ENCODE measurements at regions of chr6 and their contacts with region 1.

Region 1: GRCh38 chr6:109187399-109188114 is 92.2 kb downstream of the CEP57L1 start:
- DNase-seq: peak; percentile 72
- ATAC-seq: peak; percentile 74
- H3K4me3 ChIP-seq: no peak overlapping the region
- H3K27ac ChIP-seq: no peak overlapping the region
- H3K4me1 ChIP-seq: peaks cover 17% of the 10 kb centered on the region
- H3K27me3 ChIP-seq: no peaks in the 10 kb centered on the region
- CTCF ChIP-seq: peak; percentile 92

Region 2: GRCh38 chr6:109299776-109300564 is 112.4 kb after region 1 on chr6:
- CTCF ChIA-PET with region 1: no interaction called
- POLR2A ChIA-PET with region 1: interaction called, 3 read pairs
- intact Hi-C with region 1: loop called (anchors 5 kb)
- DNase-seq: no peak
- ATAC-seq: peak; percentile 39
- H3K4me3 ChIP-seq: no peak overlapping the region
- H3K27ac ChIP-seq: no peak overlapping the region
- H3K4me1 ChIP-seq: peaks cover 12% of the 10 kb centered on the region; the same call in 1 of the 2 replicates
- H3K27me3 ChIP-seq: no peaks in the 10 kb centered on the region
- CTCF ChIP-seq: no peak

Region 3: GRCh38 chr6:109336221-109336961 is 148.8 kb after region 1 on chr6:
- CTCF ChIA-PET with region 1: no interaction called
- POLR2A ChIA-PET with region 1: no interaction called
- intact Hi-C with region 1: loop called (anchors 2 kb)
- DNase-seq: peak; percentile 97
- ATAC-seq: peak; percentile 95
- H3K4me3 ChIP-seq: no peak overlapping the region
- H3K27ac ChIP-seq: peak overlapping the region; percentile 96
- H3K4me1 ChIP-seq: peaks cover 23% of the 10 kb centered on the region
- H3K27me3 ChIP-seq: no peaks in the 10 kb centered on the region
- CTCF ChIP-seq: no peak

Region 4: DNA sequence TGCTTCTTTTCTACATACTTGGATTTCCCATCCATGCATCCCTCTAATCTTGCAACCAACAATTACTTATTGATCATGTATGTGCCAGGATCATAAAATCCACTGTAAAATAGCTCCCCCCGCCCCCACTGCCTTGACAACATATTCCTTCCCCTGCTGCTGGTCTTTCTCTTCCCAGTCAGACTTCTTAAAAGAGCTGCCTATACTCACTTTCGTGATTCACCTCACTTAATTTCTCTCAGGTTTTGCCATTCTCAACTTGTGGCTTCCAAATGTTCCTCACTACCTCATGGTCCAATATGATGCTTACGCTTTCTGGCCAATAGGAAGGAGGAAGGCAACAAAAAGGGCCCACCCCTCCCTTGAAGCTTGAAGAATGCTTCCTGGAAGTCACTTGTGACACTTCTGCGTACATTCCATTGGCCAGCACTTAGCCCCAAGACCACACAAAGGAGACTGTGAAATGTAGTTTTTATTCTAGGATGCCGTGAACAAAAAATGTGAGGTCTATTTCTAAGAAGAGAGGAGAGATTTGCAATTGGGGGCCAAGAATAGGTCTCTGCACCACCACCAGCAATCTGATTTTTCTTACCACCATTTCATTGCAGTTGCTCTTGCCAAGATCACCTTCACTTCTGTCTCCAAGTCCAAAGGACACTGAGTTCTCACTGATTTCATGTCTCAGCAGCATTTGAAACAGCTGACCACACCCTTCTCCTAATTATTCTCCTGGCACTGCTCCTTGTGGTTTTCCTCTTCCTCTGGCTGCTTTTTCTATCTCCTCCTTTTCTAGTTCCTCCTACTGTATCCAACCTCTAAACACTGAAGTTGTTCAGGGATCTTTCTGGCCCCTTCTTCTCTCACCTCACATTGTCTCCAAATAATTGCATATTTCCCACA is 163.9 kb after region 1 on chr6:
- CTCF ChIA-PET with region 1: interaction called, 3 read pairs
- POLR2A ChIA-PET with region 1: interaction called, 10 read pairs
- intact Hi-C with region 1: no loop called
- DNase-seq: no peak
- ATAC-seq: peak; percentile 16; the same call in 1 of the 2 replicates
- H3K4me3 ChIP-seq: no peak overlapping the region
- H3K27ac ChIP-seq: no peak overlapping the region
- H3K4me1 ChIP-seq: peaks cover 21% of the 10 kb centered on the region
- H3K27me3 ChIP-seq: no peaks in the 10 kb centered on the region
- CTCF ChIP-seq: no peak

Region 5: GRCh38 chr6:109362102-109362884 is 174.7 kb after region 1 on chr6:
- CTCF ChIA-PET with region 1: no interaction called
- POLR2A ChIA-PET with region 1: no interaction called
- intact Hi-C with region 1: no loop called
- DNase-seq: no peak
- ATAC-seq: no peak
- H3K4me3 ChIP-seq: no peak overlapping the region
- H3K27ac ChIP-seq: no peak overlapping the region
- H3K4me1 ChIP-seq: no peaks in the 10 kb centered on the region
- H3K27me3 ChIP-seq: no peaks in the 10 kb centered on the region
- CTCF ChIP-seq: no peak

Region 6: GRCh38 chr6:109382576-109383437 is 195.2 kb after region 1 on chr6:
- CTCF ChIA-PET with region 1: interaction called, 8 read pairs
- POLR2A ChIA-PET with region 1: interaction called, 6 read pairs
- intact Hi-C with region 1: loop called (anchors 1 kb)
- DNase-seq: peak; percentile 83
- ATAC-seq: peak; percentile 68
- H3K4me3 ChIP-seq: peak overlapping the region; percentile 95
- H3K27ac ChIP-seq: peak overlapping the region; percentile 84
- H3K4me1 ChIP-seq: peaks cover 28% of the 10 kb centered on the region
- H3K27me3 ChIP-seq: no peaks in the 10 kb centered on the region
- CTCF ChIP-seq: peak; percentile 69

Region 7: DNA sequence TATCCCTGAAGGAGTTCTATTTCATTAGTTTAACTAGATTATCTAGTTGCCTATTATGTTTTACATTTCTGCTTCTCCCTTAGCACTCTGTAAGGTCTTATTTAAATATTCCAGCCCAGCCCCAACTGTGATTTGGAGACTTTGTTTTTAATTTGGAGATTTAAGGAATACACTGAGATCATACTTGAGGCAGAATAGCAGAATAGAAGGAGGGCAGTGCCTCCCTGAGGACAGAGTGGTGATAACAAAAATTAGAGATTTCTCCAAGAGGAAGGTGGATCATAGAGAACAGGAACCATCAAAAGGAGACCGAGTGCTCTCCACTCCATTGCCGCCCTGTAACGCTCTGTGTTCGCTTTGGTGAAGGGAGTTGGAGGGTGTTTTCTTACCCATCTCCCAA is 209.5 kb after region 1 on chr6:
- CTCF ChIA-PET with region 1: interaction called, 9 read pairs
- POLR2A ChIA-PET with region 1: interaction called, 5 read pairs
- intact Hi-C with region 1: loop called (anchors 1 kb)
- DNase-seq: peak; percentile 46
- ATAC-seq: peak; percentile 78
- H3K4me3 ChIP-seq: no peak overlapping the region
- H3K27ac ChIP-seq: no peak overlapping the region
- H3K4me1 ChIP-seq: peaks cover 10% of the 10 kb centered on the region
- H3K27me3 ChIP-seq: no peaks in the 10 kb centered on the region
- CTCF ChIP-seq: peak; percentile 64